Heart left ventricle (tissue), 16 donors: ENCODE measurements at regions of chr16 and their contacts with region 1.

Region 1: GRCh38 chr16:62516001-62516400 is 479.8 kb upstream of the CDH8 start:
- DNase-seq: no peak
- ATAC-seq: no peak
- H3K4me3 ChIP-seq: no peak overlapping the region
- H3K27ac ChIP-seq: no peak overlapping the region
- H3K4me1 ChIP-seq: no peaks in the 10 kb centered on the region
- H3K27me3 ChIP-seq: no peaks in the 10 kb centered on the region
- CTCF ChIP-seq: no peak
- POLR2A ChIP-seq: no peak

Region 2: DNA sequence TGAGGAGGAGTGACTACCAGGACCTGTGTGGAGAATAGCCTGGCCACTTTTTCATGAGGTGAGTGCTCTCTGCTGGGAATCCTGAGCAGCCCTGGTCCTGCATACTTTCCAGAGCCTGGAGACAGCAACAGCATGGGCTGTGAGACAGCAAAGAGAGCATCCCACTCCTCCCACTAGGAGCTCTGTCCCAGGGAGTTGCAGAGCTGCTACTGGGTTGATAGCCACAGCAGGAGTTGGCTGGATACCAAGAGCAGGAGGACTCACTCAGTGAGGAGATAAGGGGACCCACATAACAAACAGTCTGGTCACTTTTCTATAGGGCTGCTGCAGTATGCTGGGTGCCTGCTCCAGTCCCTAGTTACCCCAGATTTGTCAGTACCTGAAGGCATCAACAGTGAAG is 40.4 kb before region 1 on chr16:
- intact Hi-C with region 1: loop called in 1 of 10 experiments (anchors 5 kb)
- DNase-seq: no peak
- ATAC-seq: no peak
- H3K4me3 ChIP-seq: no peak overlapping the region
- H3K27ac ChIP-seq: no peak overlapping the region
- H3K4me1 ChIP-seq: no peaks in the 10 kb centered on the region
- H3K27me3 ChIP-seq: no peaks in the 10 kb centered on the region
- CTCF ChIP-seq: no peak
- POLR2A ChIP-seq: no peak